GM10248 (cell line): ENCODE measurements at regions of chr2 and their contacts with region 1.

Region 1: GRCh38 chr2:219171231-219171651 is 1.4 kb upstream of the SLC23A3 start:
- DNase-seq: peak; percentile 46
- CTCF ChIP-seq: peak; percentile 59

Region 2: GRCh38 chr2:219049282-219049681 is 122.0 kb before region 1 on chr2:
- CTCF ChIA-PET with region 1: no interaction called
- POLR2A ChIA-PET with region 1: no interaction called
- DNase-seq: no peak
- CTCF ChIP-seq: no peak

Region 3: GRCh38 chr2:219186754-219187456 is 15.7 kb after region 1 on chr2:
- CTCF ChIA-PET with region 1: interaction called, 15 read pairs
- POLR2A ChIA-PET with region 1: interaction called, 3 read pairs
- DNase-seq: peak; percentile 39
- CTCF ChIP-seq: no peak